Heart right ventricle (tissue), 16 donors: ENCODE measurements at regions of chr6 and their contacts with region 1.

Region 1: DNA sequence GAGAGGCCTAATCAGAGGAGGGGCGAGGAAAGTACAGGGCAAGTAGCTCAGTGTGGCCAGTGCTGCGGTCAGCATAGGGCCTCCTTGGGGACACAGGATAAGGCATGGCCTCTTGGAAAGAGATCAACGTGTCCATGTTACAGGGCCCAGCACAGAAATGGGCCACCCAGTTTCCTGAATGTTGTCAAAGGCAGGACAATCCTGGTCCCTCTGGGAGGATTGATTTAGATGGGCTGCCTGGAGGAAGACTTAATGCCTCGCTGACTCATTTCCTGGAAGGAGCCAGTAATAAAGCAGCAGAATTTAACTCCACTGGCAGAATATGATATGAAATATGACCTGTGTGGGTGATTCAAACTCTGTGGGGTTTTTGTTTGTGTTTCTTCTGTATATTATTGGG is 16.6 kb downstream of the DDO start:
- DNase-seq: no peak
- ATAC-seq: peak in 1 of 8 donors; percentile 57
- H3K4me3 ChIP-seq: no peak overlapping the region
- H3K27ac ChIP-seq: no peak overlapping the region
- H3K4me1 ChIP-seq: peaks cover 0 to 19% (median 14%) of the 10 kb centered on the region in 9 donors
- H3K27me3 ChIP-seq: no peaks in the 10 kb centered on the region
- CTCF ChIP-seq: no peak

Region 2: DNA sequence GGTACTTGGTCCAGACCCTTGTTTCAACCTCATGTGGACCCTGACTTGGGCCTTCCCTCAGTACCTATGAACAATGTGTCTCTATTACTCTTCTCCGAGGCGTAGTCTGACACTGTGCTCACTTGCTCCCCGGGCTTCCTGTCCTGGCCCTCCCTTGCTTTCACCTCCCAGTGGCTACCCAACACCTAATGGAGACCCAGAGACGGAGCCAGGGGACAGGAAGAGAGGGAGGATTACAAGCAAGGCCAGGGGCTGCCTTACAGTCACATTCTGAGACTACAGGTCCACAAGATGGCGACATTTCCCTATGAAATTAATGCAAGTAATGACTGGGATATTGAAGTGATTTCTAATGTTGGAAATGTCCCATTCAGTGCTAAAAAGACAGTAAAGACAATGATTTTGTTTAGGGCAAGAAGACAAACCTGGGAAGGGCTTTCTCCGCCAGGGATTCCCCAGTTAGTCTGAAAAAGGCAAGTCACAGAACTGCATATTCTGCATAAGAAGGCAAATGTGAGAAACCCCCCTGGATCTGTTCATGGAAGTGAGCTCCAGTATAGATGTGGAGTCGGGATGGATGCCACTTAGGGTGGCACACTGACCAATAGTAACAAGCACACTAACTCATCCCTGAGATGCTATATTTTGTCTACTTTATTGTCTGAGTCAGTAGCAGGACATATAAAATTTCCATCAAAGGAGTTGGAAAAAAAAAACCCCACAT is 871.7 kb before region 1 on chr6:
- intact Hi-C with region 1: loop called in 4 of 10 experiments (anchors 5 to 10 kb)
- DNase-seq: peak in 1 of 2 donors; percentile 37
- ATAC-seq: peak in 6 of 8 donors; percentile 29 to 72 (median 55)
- H3K4me3 ChIP-seq: no peak overlapping the region
- H3K27ac ChIP-seq: no peak overlapping the region
- H3K4me1 ChIP-seq: no peaks in the 10 kb centered on the region
- H3K27me3 ChIP-seq: no peaks in the 10 kb centered on the region
- CTCF ChIP-seq: peak in 8 of 9 donors; percentile 44 to 71 (median 58)

Region 3: GRCh38 chr6:110039364-110039980 is 359.3 kb before region 1 on chr6:
- intact Hi-C with region 1: loop called in 2 of 10 experiments (anchors 5 to 10 kb)
- DNase-seq: peak; percentile 82 to 83
- ATAC-seq: peak; percentile 84 to 95 (median 92)
- H3K4me3 ChIP-seq: peak overlapping the region in 7 of 10 donors; percentile 4 to 48 (median 28)
- H3K27ac ChIP-seq: peak overlapping the region in 1 of 10 donors; percentile 76
- H3K4me1 ChIP-seq: peaks cover 0 to 15% (median 5%) of the 10 kb centered on the region in 9 donors
- H3K27me3 ChIP-seq: peaks cover 0 to 4% (median 0%) of the 10 kb centered on the region in 7 donors
- CTCF ChIP-seq: peak; percentile 73 to 96 (median 90)

Region 4: GRCh38 chr6:110053395-110054240 is 345.2 kb before region 1 on chr6:
- intact Hi-C with region 1: loop called in 6 of 10 experiments (anchors 5 to 10 kb)
- DNase-seq: peak in 1 of 2 donors; percentile 25
- ATAC-seq: peak in 6 of 8 donors; percentile 34 to 62 (median 58)
- H3K4me3 ChIP-seq: no peak overlapping the region
- H3K27ac ChIP-seq: no peak overlapping the region
- H3K4me1 ChIP-seq: no peaks in the 10 kb centered on the region
- H3K27me3 ChIP-seq: peaks cover 0 to 16% (median 0%) of the 10 kb centered on the region in 7 donors
- CTCF ChIP-seq: peak; percentile 34 to 81 (median 74)

Region 5: GRCh38 chr6:110063594-110064263 is 335.0 kb before region 1 on chr6:
- intact Hi-C with region 1: loop called in 4 of 10 experiments (anchors 5 to 10 kb)
- DNase-seq: no peak
- ATAC-seq: no peak
- H3K4me3 ChIP-seq: no peak overlapping the region
- H3K27ac ChIP-seq: no peak overlapping the region
- H3K4me1 ChIP-seq: peaks cover 0 to 11% (median 0%) of the 10 kb centered on the region in 9 donors
- H3K27me3 ChIP-seq: peaks cover 0 to 35% (median 15%) of the 10 kb centered on the region in 7 donors
- CTCF ChIP-seq: no peak

Region 6: GRCh38 chr6:110446405-110446804 is 47.6 kb after region 1 on chr6:
- intact Hi-C with region 1: loop called in 1 of 10 experiments (anchors 1 kb)
- DNase-seq: no peak
- ATAC-seq: no peak
- H3K4me3 ChIP-seq: no peak overlapping the region
- H3K27ac ChIP-seq: no peak overlapping the region
- H3K4me1 ChIP-seq: peaks cover 0 to 4% (median 0%) of the 10 kb centered on the region in 9 donors
- H3K27me3 ChIP-seq: peaks cover 0 to 4% (median 0%) of the 10 kb centered on the region in 7 donors
- CTCF ChIP-seq: no peak

Region 7: DNA sequence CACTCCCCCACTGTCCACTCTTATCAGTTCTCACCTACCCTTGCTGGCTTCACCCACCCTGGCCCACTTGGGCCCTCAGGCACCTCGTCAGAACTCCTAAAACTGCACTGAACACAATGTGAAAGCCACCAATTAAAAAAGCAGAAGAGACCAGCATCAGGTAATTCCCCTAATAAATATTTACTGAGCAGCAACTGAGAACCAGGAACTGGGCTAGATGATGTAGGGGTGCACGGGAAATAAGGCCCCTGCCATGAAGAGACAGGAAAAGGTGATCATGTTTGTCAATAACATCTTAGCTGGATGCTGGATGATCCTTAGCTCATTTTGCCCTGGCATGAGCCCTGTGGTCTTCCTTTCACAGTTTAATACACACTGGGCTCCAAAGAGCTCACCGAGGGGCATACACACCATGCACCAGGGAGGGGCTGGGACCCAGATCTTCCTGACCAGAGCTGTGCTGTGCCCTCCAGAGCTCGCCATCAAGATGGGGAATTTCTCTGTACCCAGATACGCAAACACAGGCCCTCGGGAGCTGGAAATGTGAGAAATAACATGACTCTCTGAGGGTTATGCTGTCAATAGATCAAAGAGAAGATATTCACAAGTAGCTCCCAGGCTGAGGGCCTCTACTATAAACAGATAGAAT is 191.2 kb after region 1 on chr6:
- intact Hi-C with region 1: no loop called
- DNase-seq: no peak
- ATAC-seq: no peak
- H3K4me3 ChIP-seq: no peak overlapping the region
- H3K27ac ChIP-seq: no peak overlapping the region
- H3K4me1 ChIP-seq: peaks cover 0 to 25% (median 0%) of the 10 kb centered on the region in 9 donors
- H3K27me3 ChIP-seq: no peaks in the 10 kb centered on the region
- CTCF ChIP-seq: no peak